Panc1 (cell line): ENCODE measurements at regions of chr16 and their contacts with region 1.

Region 1: GRCh38 chr16:81403616-81404373 is 40.8 kb upstream of the CMIP start:
- DNase-seq: peak; percentile 33
- ATAC-seq: peak; percentile 83
- H3K4me3 ChIP-seq: peak overlapping the region; percentile 24 to 45; a peak in 3 of 4 replicates
- H3K27ac ChIP-seq: peak overlapping the region; percentile 77
- H3K4me1 ChIP-seq: peaks cover 35% of the 10 kb centered on the region
- H3K27me3 ChIP-seq: no peaks in the 10 kb centered on the region
- CTCF ChIP-seq: peak; percentile 91

Region 2: DNA sequence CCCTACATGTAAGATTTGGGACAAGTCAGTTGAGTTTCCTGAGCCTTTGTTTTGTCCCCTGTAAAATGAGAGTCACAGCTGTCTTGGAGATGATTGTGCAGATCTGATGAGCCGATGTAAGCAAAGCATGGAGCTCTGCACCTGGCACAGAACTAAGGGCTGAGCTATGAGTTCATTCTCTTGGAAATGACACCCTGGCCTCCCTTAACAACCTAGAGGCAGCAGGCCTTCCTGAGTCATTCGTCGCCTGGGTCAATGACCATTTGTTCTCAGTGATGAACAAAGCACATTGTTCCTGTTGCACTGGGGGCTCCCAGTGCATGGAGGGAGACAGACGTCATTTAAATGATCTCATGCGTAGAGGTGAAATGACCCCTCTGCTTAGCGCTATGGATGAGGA is 244.8 kb before region 1 on chr16:
- CTCF ChIA-PET with region 1: no interaction called
- POLR2A ChIA-PET with region 1: interaction called, 14 read pairs
- in situ Hi-C with region 1: no loop called
- intact Hi-C with region 1: no loop called
- DNase-seq: no peak
- ATAC-seq: no peak
- H3K4me3 ChIP-seq: no peak overlapping the region
- H3K27ac ChIP-seq: no peak overlapping the region
- H3K4me1 ChIP-seq: no peaks in the 10 kb centered on the region
- H3K27me3 ChIP-seq: no peaks in the 10 kb centered on the region
- CTCF ChIP-seq: no peak

Region 3: GRCh38 chr16:81319221-81319912 is 84.4 kb before region 1 on chr16:
- CTCF ChIA-PET with region 1: no interaction called
- POLR2A ChIA-PET with region 1: no interaction called
- in situ Hi-C with region 1: no loop called
- intact Hi-C with region 1: no loop called
- DNase-seq: no peak
- ATAC-seq: no peak
- H3K4me3 ChIP-seq: no peak overlapping the region
- H3K27ac ChIP-seq: no peak overlapping the region
- H3K4me1 ChIP-seq: peaks cover 11% of the 10 kb centered on the region
- H3K27me3 ChIP-seq: no peaks in the 10 kb centered on the region
- CTCF ChIP-seq: no peak

Region 4: DNA sequence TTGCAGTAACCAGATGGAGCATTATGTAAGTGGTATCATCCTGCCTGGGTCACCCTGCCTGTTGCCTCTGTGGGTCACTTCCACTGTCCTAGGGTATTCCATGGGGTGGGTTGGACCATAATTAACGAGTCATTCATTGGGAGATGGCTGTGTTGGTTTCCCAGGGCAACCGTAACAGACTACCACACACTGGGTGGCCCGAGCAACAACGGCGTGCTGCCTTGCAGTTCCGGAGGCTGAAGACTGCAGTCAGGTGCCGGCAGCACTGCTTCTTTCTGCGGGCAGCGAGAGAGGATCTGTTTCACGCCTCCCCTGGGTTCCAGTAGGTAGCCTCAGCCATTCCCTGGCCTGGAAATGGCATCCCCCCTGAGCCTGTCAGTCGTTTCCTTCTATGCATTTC is 12.0 kb after region 1 on chr16:
- CTCF ChIA-PET with region 1: interaction called, 4 read pairs
- POLR2A ChIA-PET with region 1: interaction called, 18 read pairs
- in situ Hi-C with region 1: no loop called
- intact Hi-C with region 1: no loop called
- DNase-seq: no peak
- ATAC-seq: no peak
- H3K4me3 ChIP-seq: no peak overlapping the region
- H3K27ac ChIP-seq: no peak overlapping the region
- H3K4me1 ChIP-seq: peaks cover 11% of the 10 kb centered on the region
- H3K27me3 ChIP-seq: no peaks in the 10 kb centered on the region
- CTCF ChIP-seq: no peak

Region 5: GRCh38 chr16:81444448-81445121 is 40.8 kb after region 1 on chr16 and contains the start of gene CMIP:
- CTCF ChIA-PET with region 1: no interaction called
- POLR2A ChIA-PET with region 1: no interaction called
- in situ Hi-C with region 1: no loop called
- intact Hi-C with region 1: loop called (anchors 5 kb)
- DNase-seq: no peak
- ATAC-seq: peak; percentile 86
- H3K4me3 ChIP-seq: peak within 1 kb of the TSS; percentile 74 to 87
- H3K27ac ChIP-seq: peak within 1 kb of the TSS; percentile 87
- H3K4me1 ChIP-seq: peaks cover 9% of the 10 kb centered on the region
- H3K27me3 ChIP-seq: no peaks in the 10 kb centered on the region
- CTCF ChIP-seq: no peak
- total RNA-seq, gene CMIP: 49.7 TPM

Region 6: DNA sequence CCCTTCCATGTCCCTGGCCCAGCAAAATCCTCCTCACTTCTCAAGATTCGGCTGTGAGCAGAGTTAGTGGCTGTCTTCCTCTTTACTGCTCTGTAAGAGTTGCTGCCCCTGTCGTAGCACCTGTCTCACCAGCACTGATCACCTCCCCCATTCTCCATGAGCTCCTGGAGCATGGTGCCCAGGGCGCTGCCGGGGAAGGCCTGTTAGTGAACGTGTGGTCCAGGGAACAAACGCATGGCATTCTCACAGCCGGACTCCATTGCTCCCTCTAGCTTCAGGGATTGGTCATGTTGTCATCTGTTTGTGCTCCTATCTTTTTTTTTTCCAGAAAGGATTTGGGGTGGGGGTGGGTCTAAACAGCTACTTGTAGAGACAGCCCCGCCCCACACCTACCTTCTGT is 182.0 kb after region 1 on chr16:
- CTCF ChIA-PET with region 1: interaction called, 8 read pairs
- POLR2A ChIA-PET with region 1: no interaction called
- in situ Hi-C with region 1: no loop called
- intact Hi-C with region 1: loop called (anchors 10 kb)
- DNase-seq: no peak
- ATAC-seq: peak; percentile 48
- H3K4me3 ChIP-seq: no peak overlapping the region; a peak in 1 of 4 replicates
- H3K27ac ChIP-seq: peak overlapping the region; percentile 91
- H3K4me1 ChIP-seq: peaks cover 72% of the 10 kb centered on the region
- H3K27me3 ChIP-seq: no peaks in the 10 kb centered on the region
- CTCF ChIP-seq: peak; percentile 82

Region 7: GRCh38 chr16:81702506-81702905 is 298.7 kb after region 1 on chr16:
- CTCF ChIA-PET with region 1: interaction called, 10 read pairs
- POLR2A ChIA-PET with region 1: no interaction called
- in situ Hi-C with region 1: no loop called
- intact Hi-C with region 1: no loop called
- DNase-seq: no peak
- ATAC-seq: no peak
- H3K4me3 ChIP-seq: no peak overlapping the region
- H3K27ac ChIP-seq: no peak overlapping the region
- H3K4me1 ChIP-seq: peaks cover 4% of the 10 kb centered on the region
- H3K27me3 ChIP-seq: no peaks in the 10 kb centered on the region
- CTCF ChIP-seq: no peak

Region 8: DNA sequence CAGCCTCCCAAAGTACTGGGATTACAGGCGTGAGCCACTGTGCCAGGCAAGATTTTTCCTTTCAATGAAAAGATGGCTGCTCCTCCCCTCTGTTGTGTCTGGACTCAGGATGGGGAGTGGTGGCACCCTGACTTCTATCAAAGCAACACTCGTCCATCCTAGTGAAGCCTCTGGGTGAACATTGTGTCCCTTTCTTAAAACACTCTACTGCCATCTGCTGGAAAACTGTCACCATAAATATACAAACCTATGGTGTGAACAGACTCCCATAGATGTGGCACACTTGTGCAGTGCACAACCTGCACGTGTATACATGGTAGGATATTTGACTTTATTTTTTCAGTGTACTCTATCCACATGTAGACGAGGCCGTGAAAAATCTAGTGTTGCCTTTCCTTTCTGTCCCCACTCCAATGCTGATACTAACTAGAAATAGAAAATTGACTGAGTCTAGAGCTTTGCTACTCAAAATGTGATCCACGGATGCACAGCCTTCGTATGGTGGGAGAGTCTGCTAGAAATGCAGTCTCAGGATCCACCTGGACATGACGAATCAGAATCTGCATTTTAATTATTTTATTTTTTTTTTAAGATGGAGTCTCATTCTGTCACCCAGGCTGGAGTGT is 319.4 kb after region 1 on chr16:
- CTCF ChIA-PET with region 1: no interaction called
- POLR2A ChIA-PET with region 1: no interaction called
- in situ Hi-C with region 1: no loop called
- intact Hi-C with region 1: loop called (anchors 2 kb)
- DNase-seq: peak; percentile 46
- ATAC-seq: peak; percentile 96
- H3K4me3 ChIP-seq: no peak overlapping the region
- H3K27ac ChIP-seq: no peak overlapping the region
- H3K4me1 ChIP-seq: no peaks in the 10 kb centered on the region
- H3K27me3 ChIP-seq: no peaks in the 10 kb centered on the region
- CTCF ChIP-seq: peak; percentile 72